B cell (primary cell): ENCODE measurements at regions of chr1 and their contacts with region 1.

Region 1: DNA sequence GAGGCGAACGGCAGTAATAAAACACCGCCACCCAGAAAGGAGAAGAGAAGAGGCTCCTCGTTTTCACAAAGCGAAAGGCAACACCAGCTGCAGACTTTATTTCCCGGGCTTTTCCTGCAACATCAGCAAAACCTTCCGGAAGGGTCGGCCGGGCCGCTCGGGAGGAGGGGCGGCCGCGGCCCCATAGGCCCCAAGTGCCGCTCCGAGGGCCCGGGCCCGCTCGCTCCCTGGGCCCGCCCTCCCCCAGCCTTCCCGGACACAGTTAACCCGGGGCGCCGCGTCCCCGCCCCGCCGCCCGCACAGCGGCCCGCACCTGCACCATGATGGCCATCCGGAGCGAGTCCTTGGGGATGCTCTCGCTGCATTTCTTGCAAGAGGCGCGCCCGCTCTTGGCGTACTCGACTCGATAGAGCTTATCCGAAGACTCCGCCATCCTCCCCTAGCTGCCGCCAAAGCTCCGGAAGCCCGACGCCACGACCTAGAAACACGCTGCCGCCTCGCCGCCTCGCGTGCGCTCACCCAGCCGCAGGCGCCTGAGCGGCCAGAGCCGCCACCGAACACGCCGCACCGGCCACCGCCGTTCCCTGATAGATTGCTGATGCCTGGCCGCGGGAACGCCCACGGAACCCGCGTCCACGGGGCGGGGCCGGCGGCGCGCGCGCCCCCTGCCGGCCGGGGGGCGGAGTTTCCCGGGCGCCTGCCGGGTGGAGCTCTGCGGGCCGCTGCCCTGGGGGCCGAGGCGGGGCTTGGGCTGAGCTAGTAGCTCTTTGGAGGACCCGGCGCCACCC is at the start of gene PARP1:
- DNase-seq: peak; percentile 94
- ATAC-seq: peak; percentile 83
- H3K4me3 ChIP-seq: peak within 1 kb of the TSS; percentile 81 to 95 (median 83)
- H3K4me3 Mint-ChIP-seq: peak within 1 kb of the TSS; percentile 91
- H3K27ac ChIP-seq: peak within 1 kb of the TSS; percentile 78 to 88
- H3K27ac Mint-ChIP-seq: peak within 1 kb of the TSS; percentile 93
- H3K4me1 ChIP-seq: peaks cover 45 to 46% of the 10 kb centered on the region in 2 donors
- H3K4me1 Mint-ChIP-seq: peaks cover 43% of the 10 kb centered on the region
- H3K27me3 ChIP-seq: no peaks in the 10 kb centered on the region
- H3K27me3 Mint-ChIP-seq: no peaks in the 10 kb centered on the region
- CTCF ChIP-seq: peak; percentile 88
- total RNA-seq, gene PARP1: 180 and 187 TPM in 2 replicates

Region 2: GRCh38 chr1:225428068-225428880 is 979.4 kb before region 1 on chr1:
- CTCF ChIA-PET with region 1: no interaction called
- POLR2A ChIA-PET with region 1: no interaction called
- intact Hi-C with region 1: loop called (anchors 5 kb)
- DNase-seq: peak; percentile 92
- ATAC-seq: peak; percentile 90
- H3K4me3 ChIP-seq: peak overlapping the region; percentile 74 to 93 (median 91)
- H3K4me3 Mint-ChIP-seq: peak overlapping the region; percentile 85
- H3K27ac ChIP-seq: peak overlapping the region; percentile 78 to 83
- H3K27ac Mint-ChIP-seq: peak overlapping the region; percentile 80
- H3K4me1 ChIP-seq: peaks cover 36 to 41% of the 10 kb centered on the region in 2 donors
- H3K4me1 Mint-ChIP-seq: peaks cover 45% of the 10 kb centered on the region
- H3K27me3 ChIP-seq: no peaks in the 10 kb centered on the region
- H3K27me3 Mint-ChIP-seq: no peaks in the 10 kb centered on the region
- CTCF ChIP-seq: no peak

Region 3: GRCh38 chr1:225999227-225999911 is 408.3 kb before region 1 on chr1 and contains the start of gene SDE2:
- CTCF ChIA-PET with region 1: interaction called, 3 read pairs
- POLR2A ChIA-PET with region 1: interaction called, 5 read pairs
- intact Hi-C with region 1: loop called (anchors 1 kb)
- DNase-seq: peak; percentile 100
- ATAC-seq: peak; percentile 81
- H3K4me3 ChIP-seq: peak within 1 kb of the TSS; percentile 75 to 93 (median 88)
- H3K4me3 Mint-ChIP-seq: peak within 1 kb of the TSS; percentile 100
- H3K27ac ChIP-seq: peak within 1 kb of the TSS; percentile 100
- H3K27ac Mint-ChIP-seq: peak within 1 kb of the TSS; percentile 97
- H3K4me1 ChIP-seq: peaks cover 65 to 72% of the 10 kb centered on the region in 2 donors
- H3K4me1 Mint-ChIP-seq: peaks cover 74% of the 10 kb centered on the region
- H3K27me3 ChIP-seq: no peaks in the 10 kb centered on the region
- H3K27me3 Mint-ChIP-seq: no peaks in the 10 kb centered on the region
- CTCF ChIP-seq: no peak
- total RNA-seq, gene SDE2: 26.0 and 26.3 TPM in 2 replicates

Region 4: DNA sequence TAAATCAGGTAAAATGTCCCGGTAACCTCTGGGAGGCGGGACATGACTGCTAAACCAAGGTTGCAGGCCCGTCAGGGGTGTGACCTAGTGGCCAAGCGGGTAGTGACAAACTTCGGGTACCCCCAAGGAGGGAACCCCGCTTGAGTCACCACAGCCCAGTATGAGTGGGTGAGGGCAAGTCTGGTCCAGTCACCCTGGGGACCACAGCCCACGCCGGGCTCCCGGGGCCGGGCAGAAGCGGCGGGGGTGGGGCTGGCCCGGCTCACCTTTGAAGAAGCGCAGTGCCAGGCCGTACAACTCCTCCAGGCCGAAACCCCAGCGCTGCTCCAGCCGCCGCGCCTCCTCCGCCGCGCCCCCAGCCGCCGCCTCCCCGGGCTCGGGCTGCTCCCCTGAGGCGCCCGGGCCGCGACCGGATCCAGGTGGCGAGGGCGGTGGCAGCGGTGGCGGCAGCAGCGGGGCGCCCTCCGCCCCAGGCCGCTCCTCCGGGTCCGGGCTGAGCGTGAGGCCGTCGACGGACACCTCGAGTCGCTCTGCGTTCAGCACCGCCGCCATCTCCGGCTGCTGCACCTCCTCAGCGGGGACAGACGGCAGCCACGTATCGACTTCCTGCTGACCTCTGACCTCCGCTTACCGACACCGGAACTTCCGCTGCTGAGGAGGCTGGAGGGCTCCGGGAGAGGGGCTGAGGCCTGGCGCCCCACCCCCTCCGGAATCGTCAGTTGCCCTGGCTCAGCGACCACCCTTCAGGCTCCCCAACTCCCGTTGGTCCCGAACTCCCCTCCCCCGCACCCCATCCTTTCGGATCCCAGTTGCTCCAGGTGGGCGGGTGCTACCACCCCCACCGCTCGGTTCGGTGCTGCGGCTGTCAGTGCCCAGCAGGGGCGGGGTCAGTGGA is 221.3 kb before region 1 on chr1 and contains the start of gene ACBD3:
- CTCF ChIA-PET with region 1: no interaction called
- POLR2A ChIA-PET with region 1: interaction called, 5 read pairs
- intact Hi-C with region 1: loop called (anchors 2 kb)
- DNase-seq: peak; percentile 92
- ATAC-seq: peak; percentile 89
- H3K4me3 ChIP-seq: peak within 1 kb of the TSS; percentile 58 to 94 (median 70)
- H3K4me3 Mint-ChIP-seq: peak within 1 kb of the TSS; percentile 96
- H3K27ac ChIP-seq: peak within 1 kb of the TSS; percentile 86 to 96
- H3K27ac Mint-ChIP-seq: peak within 1 kb of the TSS; percentile 95
- H3K4me1 ChIP-seq: peaks cover 42 to 52% of the 10 kb centered on the region in 2 donors
- H3K4me1 Mint-ChIP-seq: peaks cover 41% of the 10 kb centered on the region
- H3K27me3 ChIP-seq: no peaks in the 10 kb centered on the region
- H3K27me3 Mint-ChIP-seq: no peaks in the 10 kb centered on the region
- CTCF ChIP-seq: no peak
- total RNA-seq, gene ACBD3: 60.6 and 73.9 TPM in 2 replicates

Region 5: DNA sequence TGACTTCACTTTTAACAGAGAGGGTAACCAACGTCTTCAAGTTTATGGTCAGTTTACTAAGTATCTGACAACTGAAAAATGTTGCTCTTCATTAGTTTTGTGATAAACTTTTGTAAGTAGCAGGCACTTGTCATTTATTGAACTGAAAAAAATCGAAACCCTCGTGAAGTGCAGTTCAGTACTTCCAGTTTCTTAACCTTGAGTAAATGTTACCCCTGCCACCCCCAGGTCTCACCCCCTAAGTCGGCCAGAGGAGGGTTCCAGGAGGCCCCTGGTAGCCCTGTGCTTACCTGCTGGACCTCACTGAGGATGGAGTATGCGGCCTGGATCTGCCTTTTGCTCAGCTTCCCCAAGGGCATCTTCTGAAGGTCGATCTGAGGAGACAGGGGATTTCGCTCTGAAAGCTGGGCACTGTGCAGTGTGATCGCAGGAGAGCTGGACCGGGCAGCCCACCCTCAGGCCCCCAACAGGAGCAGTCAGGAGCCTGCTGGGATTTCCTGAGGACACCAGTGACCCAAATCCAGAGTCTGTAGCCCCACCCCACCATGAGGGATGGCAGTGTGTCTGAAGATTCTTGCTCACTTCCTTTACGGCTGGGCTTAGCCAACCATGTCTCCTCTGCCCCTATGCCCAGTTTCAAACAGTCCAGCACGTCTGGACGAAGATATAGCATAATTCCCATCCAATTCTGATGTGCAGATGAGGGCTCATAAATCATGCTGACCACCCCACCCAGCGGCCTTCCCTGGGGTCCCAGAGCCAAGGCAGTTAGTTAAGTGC is 37.4 kb before region 1 on chr1:
- CTCF ChIA-PET with region 1: interaction called, 4 read pairs
- POLR2A ChIA-PET with region 1: no interaction called
- intact Hi-C with region 1: loop called (anchors 2 kb)
- DNase-seq: peak; percentile 42
- ATAC-seq: peak; percentile 72
- H3K4me3 ChIP-seq: peak overlapping the region in 1 of 5 experiments; percentile 8
- H3K4me3 Mint-ChIP-seq: peak overlapping the region; percentile 73
- H3K27ac ChIP-seq: peak overlapping the region; percentile 58 to 81
- H3K27ac Mint-ChIP-seq: peak overlapping the region; percentile 91
- H3K4me1 ChIP-seq: peaks cover 33 to 39% of the 10 kb centered on the region in 2 donors
- H3K4me1 Mint-ChIP-seq: peaks cover 44% of the 10 kb centered on the region
- H3K27me3 ChIP-seq: no peaks in the 10 kb centered on the region
- H3K27me3 Mint-ChIP-seq: no peaks in the 10 kb centered on the region
- CTCF ChIP-seq: no peak

Region 6: DNA sequence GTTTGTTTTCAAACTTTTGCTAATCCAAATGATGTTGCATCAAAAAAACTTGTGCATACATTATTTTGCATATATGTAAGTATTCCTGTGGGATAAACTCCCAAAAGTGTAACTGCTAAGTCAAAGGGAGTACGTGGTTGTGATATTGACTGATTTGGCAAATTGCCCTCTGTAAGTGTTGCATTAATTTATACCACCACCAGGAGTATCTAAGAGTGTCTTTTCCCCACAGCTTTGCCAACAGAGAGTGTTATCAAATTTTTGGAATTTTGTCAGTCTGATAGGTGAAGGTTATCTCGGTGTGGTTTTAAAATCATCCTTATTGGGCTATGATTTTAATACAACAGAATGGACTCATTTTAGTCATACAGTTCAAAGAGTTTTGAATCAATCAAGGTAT is 30.3 kb after region 1 on chr1:
- CTCF ChIA-PET with region 1: interaction called, 36 read pairs
- POLR2A ChIA-PET with region 1: interaction called, 11 read pairs
- intact Hi-C with region 1: loop called (anchors 1 kb)
- DNase-seq: no peak
- ATAC-seq: no peak
- H3K4me3 ChIP-seq: no peak overlapping the region
- H3K4me3 Mint-ChIP-seq: no peak overlapping the region
- H3K27ac ChIP-seq: no peak overlapping the region
- H3K27ac Mint-ChIP-seq: no peak overlapping the region
- H3K4me1 ChIP-seq: peaks cover 22 to 28% of the 10 kb centered on the region in 2 donors
- H3K4me1 Mint-ChIP-seq: peaks cover 29% of the 10 kb centered on the region
- H3K27me3 ChIP-seq: no peaks in the 10 kb centered on the region
- H3K27me3 Mint-ChIP-seq: no peaks in the 10 kb centered on the region
- CTCF ChIP-seq: peak; percentile 47

Region 7: DNA sequence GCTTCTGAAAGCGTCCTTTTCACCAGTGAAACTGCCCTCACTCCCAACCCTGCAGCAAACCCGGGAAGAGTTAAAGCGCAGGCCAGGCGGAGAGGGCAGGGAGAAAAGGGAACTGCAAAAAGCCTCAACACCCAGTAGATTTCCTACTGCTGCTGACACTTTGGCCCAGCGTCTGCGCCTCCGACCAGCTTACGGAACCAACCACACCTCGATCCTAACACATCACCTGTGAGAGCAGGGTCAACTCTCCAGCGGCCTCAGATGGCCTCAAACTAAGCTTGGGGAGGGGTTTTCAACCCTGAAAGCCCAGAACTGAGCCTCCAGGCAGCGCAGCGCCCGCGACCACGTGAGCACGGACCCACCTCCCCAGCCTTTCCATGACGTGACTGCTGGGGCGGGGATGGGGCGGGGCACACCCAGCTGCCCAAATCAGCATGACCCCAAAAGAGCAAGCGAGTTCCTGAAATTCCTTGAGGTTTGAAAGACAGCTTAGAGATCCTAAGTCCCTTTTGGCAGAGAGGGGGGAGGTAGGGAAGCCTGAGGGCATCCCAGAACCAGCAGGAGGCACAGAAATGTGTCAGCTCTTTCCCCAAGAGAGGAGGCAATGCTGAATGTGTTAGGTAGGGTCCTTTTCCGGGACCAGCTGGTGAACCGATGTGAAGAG is 272.3 kb after region 1 on chr1:
- CTCF ChIA-PET with region 1: no interaction called
- POLR2A ChIA-PET with region 1: no interaction called
- intact Hi-C with region 1: loop called (anchors 5 kb)
- DNase-seq: peak; percentile 90
- ATAC-seq: peak; percentile 48
- H3K4me3 ChIP-seq: peak overlapping the region; percentile 19 to 63 (median 55)
- H3K4me3 Mint-ChIP-seq: peak overlapping the region; percentile 83
- H3K27ac ChIP-seq: peak overlapping the region; percentile 88 to 94
- H3K27ac Mint-ChIP-seq: peak overlapping the region; percentile 96
- H3K4me1 ChIP-seq: peaks cover 94 to 99% of the 10 kb centered on the region in 2 donors
- H3K4me1 Mint-ChIP-seq: peaks cover 98% of the 10 kb centered on the region
- H3K27me3 ChIP-seq: no peaks in the 10 kb centered on the region
- H3K27me3 Mint-ChIP-seq: no peaks in the 10 kb centered on the region
- CTCF ChIP-seq: no peak